Caco-2 (cell line): ENCODE measurements at regions of chr20 and their contacts with region 1.

Region 1: DNA sequence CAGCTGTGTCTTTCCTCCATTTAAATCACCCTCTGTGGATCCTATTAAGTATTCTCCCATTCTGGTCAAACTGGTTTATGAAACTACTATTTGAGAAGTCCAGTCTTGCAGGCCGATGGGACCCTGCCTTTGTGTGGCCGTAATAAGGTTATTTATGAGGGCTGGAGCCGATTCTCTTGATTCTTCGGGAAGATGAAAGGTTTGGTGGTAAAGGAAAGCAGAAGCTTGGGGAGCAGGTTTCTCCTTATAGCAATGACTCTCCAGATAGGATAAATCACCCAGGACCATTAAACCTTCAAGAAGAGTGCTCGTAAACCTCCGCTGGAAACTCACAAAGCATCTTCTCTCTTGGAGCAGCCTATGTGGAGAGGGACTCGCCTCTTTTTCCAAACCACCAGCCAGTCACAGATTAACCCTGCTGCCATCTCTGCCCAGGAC is 69.6 kb upstream of the SALL4 start:
- DNase-seq: peak; percentile 94 to 96
- H3K4me3 ChIP-seq: no peak overlapping the region
- H3K4me3 Mint-ChIP-seq: peak overlapping the region; percentile 62
- H3K27ac Mint-ChIP-seq: peak overlapping the region; percentile 82
- H3K4me1 ChIP-seq: peaks cover 21% of the 10 kb centered on the region
- H3K4me1 Mint-ChIP-seq: peaks cover 35% of the 10 kb centered on the region
- H3K27me3 ChIP-seq: no peaks in the 10 kb centered on the region
- H3K27me3 Mint-ChIP-seq: no peaks in the 10 kb centered on the region
- CTCF ChIP-seq: no peak

Region 2: GRCh38 chr20:51703400-51704287 is 168.2 kb before region 1 on chr20:
- CTCF ChIA-PET with region 1: interaction called, 4 read pairs
- POLR2A ChIA-PET with region 1: no interaction called
- intact Hi-C with region 1: loop called (anchors 5 kb)
- DNase-seq: peak; percentile 69 to 81
- H3K4me3 ChIP-seq: no peak overlapping the region
- H3K4me3 Mint-ChIP-seq: peak overlapping the region; percentile 61
- H3K27ac Mint-ChIP-seq: peak overlapping the region; percentile 83
- H3K4me1 ChIP-seq: peaks cover 61% of the 10 kb centered on the region
- H3K4me1 Mint-ChIP-seq: peaks cover 66% of the 10 kb centered on the region
- H3K27me3 ChIP-seq: no peaks in the 10 kb centered on the region
- H3K27me3 Mint-ChIP-seq: no peaks in the 10 kb centered on the region
- CTCF ChIP-seq: no peak

Region 3: DNA sequence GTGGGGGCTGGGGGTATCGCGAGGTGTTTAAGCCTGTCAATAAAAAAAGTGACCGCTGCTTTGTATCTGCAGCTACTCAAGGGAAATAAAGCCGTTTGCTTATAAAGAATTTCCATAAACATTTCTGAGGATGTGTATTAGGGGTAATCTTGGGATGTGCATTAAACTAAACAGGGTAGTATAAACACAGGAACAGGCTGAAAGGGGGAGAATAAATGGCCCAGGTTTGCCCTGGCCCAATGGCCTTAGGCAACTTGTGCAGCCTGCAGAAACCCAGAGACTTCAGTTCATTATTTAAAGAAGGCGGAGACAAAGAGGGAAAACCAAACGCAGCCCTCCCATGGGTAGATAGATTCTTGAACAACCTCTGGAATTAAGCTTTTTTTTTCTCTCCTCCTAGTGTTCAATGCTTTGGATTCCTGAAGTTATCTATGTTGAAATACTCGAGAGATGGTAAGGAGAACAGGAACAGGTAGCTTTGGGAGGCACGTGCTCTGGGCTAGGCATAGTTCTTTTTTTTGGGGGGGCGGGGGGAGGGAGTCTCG is 33.9 kb before region 1 on chr20:
- CTCF ChIA-PET with region 1: no interaction called
- POLR2A ChIA-PET with region 1: no interaction called
- intact Hi-C with region 1: loop called (anchors 1 kb)
- DNase-seq: peak; percentile 62 to 68
- H3K4me3 ChIP-seq: no peak overlapping the region
- H3K4me3 Mint-ChIP-seq: no peak overlapping the region
- H3K27ac Mint-ChIP-seq: peak overlapping the region; percentile 75
- H3K4me1 ChIP-seq: peaks cover 13% of the 10 kb centered on the region
- H3K4me1 Mint-ChIP-seq: peaks cover 17% of the 10 kb centered on the region
- H3K27me3 ChIP-seq: no peaks in the 10 kb centered on the region
- H3K27me3 Mint-ChIP-seq: no peaks in the 10 kb centered on the region
- CTCF ChIP-seq: no peak

Region 4: GRCh38 chr20:51889466-51889865 is 17.6 kb after region 1 on chr20:
- CTCF ChIA-PET with region 1: no interaction called
- POLR2A ChIA-PET with region 1: no interaction called
- intact Hi-C with region 1: loop called (anchors 1 kb)
- DNase-seq: peak; percentile 62 to 72
- H3K4me3 ChIP-seq: no peak overlapping the region
- H3K4me3 Mint-ChIP-seq: peak overlapping the region; percentile 66
- H3K27ac Mint-ChIP-seq: peak overlapping the region; percentile 77
- H3K4me1 ChIP-seq: peaks cover 52% of the 10 kb centered on the region
- H3K4me1 Mint-ChIP-seq: peaks cover 49% of the 10 kb centered on the region
- H3K27me3 ChIP-seq: no peaks in the 10 kb centered on the region
- H3K27me3 Mint-ChIP-seq: no peaks in the 10 kb centered on the region
- CTCF ChIP-seq: no peak

Region 5: DNA sequence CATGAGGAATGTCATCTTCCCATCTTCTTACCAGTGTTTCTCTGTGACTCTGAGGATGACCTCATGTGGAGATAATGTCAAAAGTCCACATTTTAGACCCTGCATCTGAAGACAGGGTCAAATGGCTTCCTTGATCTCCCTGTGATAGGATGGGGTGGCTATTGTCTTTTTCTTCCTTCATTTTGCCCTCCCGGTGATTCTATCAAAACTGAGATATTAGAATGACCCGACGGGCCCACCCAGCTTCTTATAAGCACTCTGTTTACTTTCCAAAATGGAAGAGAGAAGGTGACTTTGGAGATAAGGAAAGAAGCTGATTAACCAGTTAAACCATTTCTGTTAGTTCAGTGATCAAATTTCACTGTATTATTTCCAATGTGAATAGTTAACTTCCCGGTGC is 46.1 kb after region 1 on chr20:
- CTCF ChIA-PET with region 1: no interaction called
- POLR2A ChIA-PET with region 1: no interaction called
- intact Hi-C with region 1: loop called (anchors 1 kb)
- DNase-seq: peak; percentile 69 to 71
- H3K4me3 ChIP-seq: no peak overlapping the region
- H3K4me3 Mint-ChIP-seq: peak overlapping the region; percentile 68
- H3K27ac Mint-ChIP-seq: peak overlapping the region; percentile 89
- H3K4me1 ChIP-seq: peaks cover 32% of the 10 kb centered on the region
- H3K4me1 Mint-ChIP-seq: peaks cover 33% of the 10 kb centered on the region
- H3K27me3 ChIP-seq: no peaks in the 10 kb centered on the region
- H3K27me3 Mint-ChIP-seq: no peaks in the 10 kb centered on the region
- CTCF ChIP-seq: no peak

Region 6: GRCh38 chr20:53176134-53176533 is 1304.2 kb after region 1 on chr20:
- CTCF ChIA-PET with region 1: no interaction called
- POLR2A ChIA-PET with region 1: no interaction called
- intact Hi-C with region 1: no loop called
- DNase-seq: peak in 1 of 2 experiments; percentile 17
- H3K4me3 ChIP-seq: no peak overlapping the region
- H3K4me3 Mint-ChIP-seq: no peak overlapping the region
- H3K27ac Mint-ChIP-seq: no peak overlapping the region
- H3K4me1 ChIP-seq: no peaks in the 10 kb centered on the region
- H3K4me1 Mint-ChIP-seq: no peaks in the 10 kb centered on the region
- H3K27me3 ChIP-seq: no peaks in the 10 kb centered on the region
- H3K27me3 Mint-ChIP-seq: peaks cover 20% of the 10 kb centered on the region
- CTCF ChIP-seq: no peak